SK-N-SH (cell line): ENCODE measurements at regions of chr1 and their contacts with region 1.

Region 1: DNA sequence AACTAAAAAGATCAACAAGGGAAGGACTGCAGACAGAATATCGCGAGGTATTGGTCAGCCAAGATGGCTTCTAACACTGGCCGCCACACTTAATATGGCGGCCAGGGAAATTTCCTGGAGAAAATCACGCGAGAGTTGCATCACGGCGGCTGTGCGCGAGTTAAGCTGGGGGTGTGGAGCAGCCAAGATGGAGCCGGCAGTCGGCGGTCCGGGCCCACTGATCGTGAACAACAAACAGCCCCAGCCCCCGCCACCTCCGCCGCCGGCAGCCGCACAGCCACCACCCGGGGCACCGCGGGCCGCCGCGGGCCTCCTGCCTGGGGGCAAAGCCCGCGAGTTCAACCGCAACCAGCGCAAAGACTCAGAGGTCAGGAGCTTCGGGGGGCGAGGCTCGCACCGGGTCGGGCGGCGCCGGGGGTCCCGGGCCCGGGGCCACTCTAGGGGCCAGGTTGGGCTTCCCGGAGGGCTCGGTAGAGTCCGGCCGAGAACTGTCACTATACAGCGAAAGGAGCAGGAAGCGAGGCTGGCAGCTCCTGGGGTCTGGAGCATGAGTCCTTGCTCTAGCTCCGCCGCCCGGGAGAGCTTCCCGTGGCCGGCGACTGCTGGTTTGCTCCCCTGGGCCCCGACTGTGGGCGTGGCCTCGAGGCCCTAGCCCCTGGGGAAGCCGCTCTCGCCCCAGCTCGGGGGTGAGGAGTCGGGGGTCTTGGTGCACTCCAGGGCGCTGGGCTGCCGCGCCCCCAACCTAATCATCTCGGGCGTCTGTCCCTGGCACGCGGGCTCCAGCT is at the start of gene STRIP1:
- DNase-seq: peak; percentile 91
- H3K4me3 ChIP-seq: peak within 1 kb of the TSS; percentile 62 to 99
- H3K27ac ChIP-seq: peak within 1 kb of the TSS; percentile 89
- H3K4me1 ChIP-seq: peaks cover 4 to 9% of the 10 kb centered on the region in 2 experiments; a peak in 3 of 4 replicates
- H3K27me3 ChIP-seq: no peaks in the 10 kb centered on the region
- CTCF ChIP-seq: no peak
- EP300 ChIP-seq: no peak; a peak in 1 of 4 replicates
- RAD21 ChIP-seq: no peak
- polyA plus RNA-seq, gene STRIP1: 34.6 and 46.3 TPM in 2 replicates

Region 2: DNA sequence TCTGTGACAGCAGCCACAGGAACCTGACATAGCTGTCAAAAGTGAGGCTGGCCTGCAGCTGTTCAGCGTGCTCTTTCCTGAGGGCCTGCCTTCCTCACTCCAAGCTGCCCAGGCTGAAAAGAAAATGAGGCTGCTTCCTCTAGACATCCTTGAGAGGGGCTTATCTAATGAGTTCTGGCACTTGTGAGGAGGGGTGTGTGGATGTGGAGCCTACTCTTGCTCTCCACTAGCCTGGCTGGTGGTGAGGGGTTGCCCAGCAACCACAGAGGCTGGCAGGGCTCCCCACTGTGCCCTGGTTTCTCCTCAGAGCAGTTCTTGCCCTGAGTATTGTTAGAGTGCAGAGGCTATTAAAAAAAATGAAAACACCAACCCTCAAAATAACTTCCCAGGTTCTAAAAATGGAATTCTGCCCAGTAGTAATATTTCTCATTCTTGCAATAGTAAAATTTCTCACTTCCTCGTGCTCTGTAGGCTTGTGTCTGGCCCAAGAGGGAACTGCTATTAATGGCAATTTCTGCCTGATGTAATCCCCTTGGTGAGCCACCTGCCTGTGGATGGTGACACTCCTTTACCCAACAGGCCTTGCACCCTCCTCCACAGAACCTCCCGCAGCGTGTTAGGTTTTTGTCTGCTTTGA is 218.3 kb before region 1 on chr1:
- CTCF ChIA-PET with region 1: no interaction called
- POLR2A ChIA-PET with region 1: no interaction called
- DNase-seq: no peak
- H3K4me3 ChIP-seq: no peak overlapping the region
- H3K27ac ChIP-seq: no peak overlapping the region
- H3K4me1 ChIP-seq: peaks cover 4 to 7% of the 10 kb centered on the region in 2 experiments; a peak in 3 of 4 replicates
- H3K27me3 ChIP-seq: no peaks in the 10 kb centered on the region
- CTCF ChIP-seq: no peak
- EP300 ChIP-seq: no peak
- RAD21 ChIP-seq: no peak

Region 3: DNA sequence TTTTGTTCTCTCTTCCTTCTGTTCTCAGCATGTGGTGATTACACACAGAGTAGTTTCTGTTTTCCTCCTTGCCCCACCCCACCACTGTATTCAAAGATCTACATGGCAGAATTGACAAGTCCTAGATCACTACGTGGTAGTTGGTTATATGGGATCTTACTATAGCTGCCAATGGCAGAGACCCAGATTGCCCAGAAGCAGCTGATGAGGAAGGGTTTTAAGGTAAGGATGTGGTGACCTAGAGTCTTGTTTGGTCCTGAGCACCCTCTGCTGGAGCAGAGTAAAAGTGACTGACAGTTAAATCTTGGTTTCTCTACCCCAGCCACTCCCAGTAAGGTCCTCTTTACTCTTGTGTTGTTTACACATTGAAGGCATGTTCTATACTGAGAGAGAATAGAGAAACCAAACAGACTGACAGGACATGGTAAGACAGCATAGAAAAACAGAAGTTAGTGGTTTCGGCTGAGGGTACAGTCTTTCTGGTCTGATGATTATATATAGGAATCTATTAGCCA is 23.1 kb before region 1 on chr1:
- CTCF ChIA-PET with region 1: interaction called, 25 read pairs
- POLR2A ChIA-PET with region 1: interaction called, 3 read pairs
- DNase-seq: peak; percentile 47
- H3K4me3 ChIP-seq: no peak overlapping the region
- H3K27ac ChIP-seq: peak overlapping the region in 1 of 2 experiments; percentile 92; a peak in 2 of 4 replicates
- H3K4me1 ChIP-seq: peaks cover 0 to 26% of the 10 kb centered on the region in 2 experiments; a peak in 2 of 4 replicates
- H3K27me3 ChIP-seq: no peaks in the 10 kb centered on the region
- CTCF ChIP-seq: peak; percentile 69
- EP300 ChIP-seq: no peak
- RAD21 ChIP-seq: peak; percentile 73

Region 4: GRCh38 chr1:110019770-110020169 is 14.9 kb before region 1 on chr1:
- CTCF ChIA-PET with region 1: interaction called, 21 read pairs
- POLR2A ChIA-PET with region 1: interaction called, 9 read pairs
- DNase-seq: no peak
- H3K4me3 ChIP-seq: no peak overlapping the region
- H3K27ac ChIP-seq: no peak overlapping the region; a peak in 1 of 4 replicates
- H3K4me1 ChIP-seq: peaks cover 0 to 6% of the 10 kb centered on the region in 2 experiments; a peak in 1 of 4 replicates
- H3K27me3 ChIP-seq: no peaks in the 10 kb centered on the region
- CTCF ChIP-seq: no peak
- EP300 ChIP-seq: no peak
- RAD21 ChIP-seq: no peak

Region 5: GRCh38 chr1:110047471-110047870 is 12.8 kb after region 1 on chr1:
- CTCF ChIA-PET with region 1: interaction called, 29 read pairs
- POLR2A ChIA-PET with region 1: interaction called, 16 read pairs
- DNase-seq: no peak
- H3K4me3 ChIP-seq: no peak overlapping the region
- H3K27ac ChIP-seq: no peak overlapping the region; a peak in 1 of 4 replicates
- H3K4me1 ChIP-seq: peaks cover 11 to 32% of the 10 kb centered on the region in 2 experiments; a peak in 1 of 4 replicates
- H3K27me3 ChIP-seq: no peaks in the 10 kb centered on the region
- CTCF ChIP-seq: no peak
- EP300 ChIP-seq: no peak
- RAD21 ChIP-seq: no peak

Region 6: DNA sequence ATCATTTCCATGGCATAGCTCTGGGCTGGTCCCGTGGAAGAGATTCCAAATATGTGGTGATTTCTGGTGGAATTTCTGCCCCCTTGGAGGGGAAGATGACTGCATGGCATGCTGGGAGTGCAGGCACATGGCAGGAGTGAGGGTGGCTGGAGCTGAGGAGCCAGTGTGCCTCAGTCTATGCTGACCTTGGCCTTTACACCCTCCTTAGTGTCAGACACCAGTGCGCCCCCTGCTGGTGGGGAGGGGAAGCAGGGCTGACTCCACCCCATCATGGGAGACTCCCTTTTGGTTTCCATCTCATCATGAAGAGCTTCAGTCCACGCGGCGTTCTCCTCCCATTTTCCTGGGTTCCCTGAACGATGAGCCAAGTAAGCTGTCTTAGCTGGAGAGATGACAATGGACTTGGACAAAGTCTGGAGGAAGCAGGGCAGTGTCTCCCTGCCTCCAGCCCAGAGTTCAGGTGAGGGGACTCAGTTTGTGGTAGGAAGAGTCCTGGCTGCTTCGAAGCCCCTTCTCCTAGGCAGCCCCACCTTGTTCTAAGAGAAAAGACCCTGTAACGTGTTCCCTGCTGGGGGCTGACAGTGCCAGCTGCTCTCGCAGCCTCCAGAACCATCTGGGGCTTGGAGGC is 25.5 kb after region 1 on chr1:
- CTCF ChIA-PET with region 1: interaction called, 12 read pairs
- POLR2A ChIA-PET with region 1: interaction called, 6 read pairs
- DNase-seq: no peak
- H3K4me3 ChIP-seq: no peak overlapping the region; a peak in 1 of 4 replicates
- H3K27ac ChIP-seq: peak overlapping the region in 1 of 2 experiments; percentile 93; a peak in 2 of 4 replicates
- H3K4me1 ChIP-seq: peaks cover 42 to 97% of the 10 kb centered on the region in 2 experiments
- H3K27me3 ChIP-seq: no peaks in the 10 kb centered on the region
- CTCF ChIP-seq: peak; percentile 81
- EP300 ChIP-seq: no peak
- RAD21 ChIP-seq: no peak